ENCODE measurements at regions of chr1 and their contacts with region 1.

Region 1: GRCh38 chr1:46522184-46522968 is 29.1 kb downstream of the KNCN start:
- DNase-seq: peak; percentile 74
- H3K4me3 Mint-ChIP-seq: peak overlapping the region; percentile 38
- H3K27ac Mint-ChIP-seq: peak overlapping the region; percentile 82
- H3K4me1 Mint-ChIP-seq: peaks cover 14% of the 10 kb centered on the region
- H3K27me3 Mint-ChIP-seq: peaks cover 25% of the 10 kb centered on the region

Region 2: GRCh38 chr1:46477153-46477929 is 45.0 kb before region 1 on chr1:
- CTCF ChIA-PET with region 1: interaction called, 111 read pairs
- POLR2A ChIA-PET with region 1: interaction called, 4 read pairs
- intact Hi-C with region 1: no loop called
- DNase-seq: peak; percentile 88
- H3K4me3 Mint-ChIP-seq: no peak overlapping the region
- H3K27ac Mint-ChIP-seq: no peak overlapping the region
- H3K4me1 Mint-ChIP-seq: no peaks in the 10 kb centered on the region
- H3K27me3 Mint-ChIP-seq: peaks cover 24% of the 10 kb centered on the region

Region 3: DNA sequence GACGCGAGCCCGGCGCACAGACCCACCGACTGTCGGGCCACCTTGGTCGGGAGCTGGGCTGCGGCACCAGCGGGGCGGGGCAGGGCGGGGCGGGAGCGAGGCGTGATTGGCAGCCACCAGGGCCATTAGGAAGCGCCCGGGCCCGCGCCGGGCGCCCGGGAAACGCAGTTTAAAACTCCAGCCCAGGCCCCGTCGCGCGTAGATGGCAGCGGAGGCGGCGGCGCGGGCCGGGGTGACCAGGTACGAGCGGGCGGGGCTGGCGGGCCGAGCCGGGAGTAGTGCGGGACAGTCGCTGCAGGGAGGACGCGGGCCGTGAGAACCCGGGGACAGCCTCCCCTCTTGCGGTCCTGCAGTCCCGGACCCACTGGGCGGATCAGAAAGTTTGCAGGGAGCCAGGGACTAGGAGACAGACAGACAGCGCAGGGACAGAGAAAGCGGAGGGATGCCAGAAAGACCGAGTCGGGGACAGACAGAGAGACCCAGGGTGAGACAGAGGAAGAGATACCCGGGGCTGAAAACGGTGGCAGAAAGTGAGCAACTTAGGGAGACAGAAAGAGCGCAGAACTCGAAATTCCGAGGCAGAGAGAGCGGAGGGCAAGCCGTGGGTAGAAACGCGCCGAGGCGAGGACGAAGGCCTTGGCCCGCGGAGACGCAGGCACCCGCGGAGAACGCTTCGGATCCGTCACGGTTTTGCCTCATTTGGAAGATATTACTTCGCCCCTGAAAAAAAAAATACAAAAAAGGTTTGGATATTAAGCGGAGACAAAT is 32.6 kb before region 1 on chr1 and contains the start of gene DMBX1:
- CTCF ChIA-PET with region 1: interaction called, 21 read pairs
- POLR2A ChIA-PET with region 1: no interaction called
- intact Hi-C with region 1: no loop called
- DNase-seq: peak; percentile 68
- H3K4me3 Mint-ChIP-seq: peak within 1 kb of the TSS; percentile 67
- H3K27ac Mint-ChIP-seq: no peak within 1 kb of the TSS
- H3K4me1 Mint-ChIP-seq: peaks cover 33% of the 10 kb centered on the region
- H3K27me3 Mint-ChIP-seq: peaks cover 81% of the 10 kb centered on the region
- total RNA-seq, gene DMBX1: 0.10 to 0.12 TPM

Region 4: GRCh38 chr1:46569884-46570725 is 47.7 kb after region 1 on chr1:
- CTCF ChIA-PET with region 1: no interaction called
- POLR2A ChIA-PET with region 1: no interaction called
- intact Hi-C with region 1: no loop called
- DNase-seq: no peak
- H3K4me3 Mint-ChIP-seq: no peak overlapping the region
- H3K27ac Mint-ChIP-seq: no peak overlapping the region
- H3K4me1 Mint-ChIP-seq: no peaks in the 10 kb centered on the region
- H3K27me3 Mint-ChIP-seq: no peaks in the 10 kb centered on the region

Region 5: DNA sequence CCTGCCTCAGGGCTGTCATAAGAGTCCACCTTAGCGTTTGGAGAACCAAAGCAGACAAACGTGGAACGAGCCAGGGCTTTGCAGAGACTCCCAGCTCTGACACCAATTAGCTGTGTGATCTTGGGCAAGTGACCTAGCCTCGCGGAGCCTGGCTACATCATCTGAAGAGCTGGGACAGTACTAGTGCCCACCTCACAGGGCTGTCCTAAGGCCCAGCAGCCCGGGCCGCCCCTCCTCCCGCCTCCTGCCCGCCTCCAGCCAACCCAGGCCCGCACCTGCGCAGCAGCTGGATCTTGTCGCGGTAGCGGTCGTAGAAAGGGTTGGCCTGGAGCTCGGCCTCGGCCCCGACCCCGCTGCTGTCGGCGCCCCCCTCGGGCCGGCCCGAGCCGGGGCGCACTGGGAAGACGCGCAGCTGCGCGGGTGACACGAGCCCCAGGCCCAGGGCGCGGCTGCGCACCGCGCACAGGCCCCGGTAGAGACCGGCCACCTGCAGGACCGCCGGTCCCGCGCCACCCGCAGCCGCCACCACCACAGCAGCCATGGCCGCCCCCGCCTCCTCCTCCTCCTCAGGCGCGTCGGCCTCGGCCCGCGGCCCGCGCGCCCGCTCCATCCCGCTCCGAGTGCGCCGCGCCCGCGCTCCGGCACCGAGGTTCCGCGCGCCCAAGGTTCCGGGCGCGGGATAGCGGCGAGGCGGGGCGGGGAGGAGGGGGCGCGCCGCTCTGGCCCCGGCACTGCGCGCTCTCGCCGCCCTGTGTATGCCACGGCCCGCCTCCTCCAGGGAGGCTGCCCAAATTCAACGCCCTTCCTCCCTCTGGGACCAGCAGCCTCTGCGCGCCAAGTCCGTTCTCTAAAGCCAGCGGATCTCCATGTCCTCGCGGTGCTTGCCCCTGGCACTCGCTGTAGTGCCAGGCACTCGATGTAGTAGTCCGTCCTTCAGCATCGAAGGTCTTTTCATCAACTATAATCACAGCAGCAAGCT is 145.7 kb after region 1 on chr1 and contains the start of gene ATPAF1:
- CTCF ChIA-PET with region 1: no interaction called
- POLR2A ChIA-PET with region 1: no interaction called
- intact Hi-C with region 1: loop called (anchors 2 kb)
- DNase-seq: peak; percentile 85
- H3K4me3 Mint-ChIP-seq: no peak within 1 kb of the TSS
- H3K27ac Mint-ChIP-seq: peak within 1 kb of the TSS; percentile 36
- H3K4me1 Mint-ChIP-seq: peaks cover 16% of the 10 kb centered on the region
- H3K27me3 Mint-ChIP-seq: no peaks in the 10 kb centered on the region
- total RNA-seq, gene ATPAF1: 45.0 to 45.9 TPM

Region 6: GRCh38 chr1:47147047-47147785 is 624.8 kb after region 1 on chr1:
- CTCF ChIA-PET with region 1: no interaction called
- POLR2A ChIA-PET with region 1: no interaction called
- intact Hi-C with region 1: no loop called
- DNase-seq: no peak
- H3K4me3 Mint-ChIP-seq: no peak overlapping the region
- H3K27ac Mint-ChIP-seq: no peak overlapping the region
- H3K4me1 Mint-ChIP-seq: no peaks in the 10 kb centered on the region
- H3K27me3 Mint-ChIP-seq: peaks cover 20% of the 10 kb centered on the region